ENCODE measurements at regions of chr18 and their contacts with region 1.

Region 1: DNA sequence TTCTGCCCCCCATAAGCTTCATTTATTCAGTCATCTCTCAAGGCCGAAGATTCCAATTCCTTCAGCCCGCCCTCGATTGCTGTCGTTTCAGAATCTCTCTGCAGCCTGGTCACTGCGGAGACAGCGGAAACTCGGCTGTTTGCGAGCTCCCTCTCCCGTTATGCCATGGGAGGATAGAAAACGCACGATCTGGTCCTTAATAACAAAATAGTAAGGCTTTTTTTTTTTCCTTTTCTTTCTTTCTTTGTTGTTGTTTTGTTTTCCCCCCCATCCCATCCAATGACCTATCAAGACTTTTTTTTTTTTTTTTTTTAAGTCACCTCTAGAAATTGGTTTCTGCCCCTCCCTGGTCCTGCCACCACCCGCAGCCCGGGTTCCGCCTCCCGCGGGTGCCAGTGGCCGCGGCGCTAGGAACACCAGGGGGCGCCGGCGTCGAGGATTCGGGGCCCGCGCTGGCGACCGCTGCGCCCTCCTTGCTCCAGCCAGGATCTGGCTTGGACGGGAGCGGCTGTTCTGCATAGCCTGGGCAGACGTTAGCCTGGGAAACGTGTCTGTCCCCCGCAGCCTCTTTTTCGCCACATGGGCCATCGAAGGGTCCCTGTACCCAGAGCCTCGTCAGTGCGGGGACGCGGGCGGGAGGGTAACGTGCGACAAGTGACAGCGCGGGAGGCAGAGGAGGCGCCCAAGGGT is 10.1 kb downstream of the CPLX4 start:
- DNase-seq: peak; percentile 82
- H3K4me3 ChIP-seq: peak overlapping the region; percentile 46
- H3K27ac ChIP-seq: no peak overlapping the region
- H3K4me1 ChIP-seq: no peaks in the 10 kb centered on the region
- H3K27me3 ChIP-seq: no peaks in the 10 kb centered on the region
- CTCF ChIP-seq: peak; percentile 99

Region 2: DNA sequence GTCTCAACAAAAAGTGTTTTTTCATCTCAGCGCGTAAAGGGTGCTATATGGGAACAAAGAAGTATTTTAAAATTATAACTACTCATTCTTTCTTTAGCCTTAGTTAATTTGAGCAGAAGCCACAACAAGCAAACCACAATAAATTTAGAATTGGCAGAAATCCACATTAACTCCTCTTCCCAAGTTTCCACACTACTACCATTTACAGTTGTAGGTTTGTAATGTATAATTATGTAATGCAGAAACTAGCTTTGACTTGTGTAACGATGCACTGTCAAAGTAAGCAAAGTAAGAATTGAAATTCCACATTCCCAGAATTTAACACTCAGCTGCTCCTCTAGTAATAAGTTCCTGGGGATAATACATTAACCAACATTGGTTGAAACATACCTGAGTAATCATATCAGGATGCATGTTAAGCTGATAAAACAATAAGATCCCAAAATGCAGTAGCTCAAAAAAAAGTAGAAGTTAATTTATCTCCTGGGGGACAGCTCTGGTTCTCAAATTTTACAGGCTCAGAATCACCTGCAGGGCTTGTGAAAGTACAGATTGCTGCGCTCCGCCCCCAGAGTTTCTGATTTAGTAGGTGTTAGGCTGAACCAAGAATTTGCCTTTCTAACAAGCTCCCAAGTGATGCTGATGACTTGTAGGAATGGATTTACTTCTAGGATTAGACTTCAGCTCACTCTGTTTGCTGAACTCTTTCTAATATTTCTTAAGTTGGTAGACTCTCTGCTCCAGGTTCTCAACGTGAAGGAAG is 78.5 kb before region 1 on chr18:
- CTCF ChIA-PET with region 1: interaction called, 12 read pairs
- POLR2A ChIA-PET with region 1: no interaction called
- intact Hi-C with region 1: no loop called
- DNase-seq: no peak
- H3K4me3 ChIP-seq: no peak overlapping the region
- H3K27ac ChIP-seq: peak overlapping the region; percentile 49
- H3K4me1 ChIP-seq: peaks cover 68% of the 10 kb centered on the region
- H3K27me3 ChIP-seq: no peaks in the 10 kb centered on the region
- CTCF ChIP-seq: no peak

Region 3: GRCh38 chr18:59249205-59249774 is 59.1 kb before region 1 on chr18:
- CTCF ChIA-PET with region 1: interaction called, 4 read pairs
- POLR2A ChIA-PET with region 1: interaction called, 11 read pairs
- intact Hi-C with region 1: loop called (anchors 1 kb)
- DNase-seq: peak; percentile 94
- H3K4me3 ChIP-seq: no peak overlapping the region
- H3K27ac ChIP-seq: peak overlapping the region; percentile 44
- H3K4me1 ChIP-seq: peaks cover 19% of the 10 kb centered on the region
- H3K27me3 ChIP-seq: no peaks in the 10 kb centered on the region
- CTCF ChIP-seq: peak; percentile 86

Region 4: GRCh38 chr18:59272971-59273935 is 35.1 kb before region 1 on chr18 and contains the start of gene RAX:
- CTCF ChIA-PET with region 1: interaction called, 15 read pairs
- POLR2A ChIA-PET with region 1: no interaction called
- intact Hi-C with region 1: no loop called
- DNase-seq: peak; percentile 92
- H3K4me3 ChIP-seq: peak within 1 kb of the TSS; percentile 81
- H3K27ac ChIP-seq: peak within 1 kb of the TSS; percentile 74
- H3K4me1 ChIP-seq: peaks cover 26% of the 10 kb centered on the region
- H3K27me3 ChIP-seq: no peaks in the 10 kb centered on the region
- CTCF ChIP-seq: peak; percentile 77
- total RNA-seq, gene RAX: 18.3 and 19.3 TPM in 2 replicates

Region 5: GRCh38 chr18:59340817-59341216 is 32.4 kb after region 1 on chr18:
- CTCF ChIA-PET with region 1: interaction called, 10 read pairs
- POLR2A ChIA-PET with region 1: no interaction called
- intact Hi-C with region 1: no loop called
- DNase-seq: no peak
- H3K4me3 ChIP-seq: no peak overlapping the region
- H3K27ac ChIP-seq: no peak overlapping the region
- H3K4me1 ChIP-seq: no peaks in the 10 kb centered on the region
- H3K27me3 ChIP-seq: no peaks in the 10 kb centered on the region
- CTCF ChIP-seq: no peak

Region 6: GRCh38 chr18:59814891-59815290 is 506.5 kb after region 1 on chr18:
- CTCF ChIA-PET with region 1: no interaction called
- POLR2A ChIA-PET with region 1: no interaction called
- intact Hi-C with region 1: loop called (anchors 10 kb)
- DNase-seq: no peak
- H3K4me3 ChIP-seq: no peak overlapping the region
- H3K27ac ChIP-seq: no peak overlapping the region
- H3K4me1 ChIP-seq: no peaks in the 10 kb centered on the region
- H3K27me3 ChIP-seq: peaks cover 3% of the 10 kb centered on the region
- CTCF ChIP-seq: no peak